ENCODE measurements at regions of chr17 and their contacts with region 1.

Region 1: GRCh38 chr17:62109378-62109902 is 44.4 kb upstream of the MED13 start:
- DNase-seq: peak; percentile 91
- H3K4me3 ChIP-seq: no peak overlapping the region
- H3K4me3 Mint-ChIP-seq: no peak overlapping the region
- H3K27ac Mint-ChIP-seq: no peak overlapping the region
- H3K4me1 ChIP-seq: peaks cover 16% of the 10 kb centered on the region
- H3K4me1 Mint-ChIP-seq: peaks cover 9% of the 10 kb centered on the region
- H3K27me3 ChIP-seq: no peaks in the 10 kb centered on the region
- H3K27me3 Mint-ChIP-seq: no peaks in the 10 kb centered on the region
- CTCF ChIP-seq: peak; percentile 90 to 99

Region 2: GRCh38 chr17:61635913-61636432 is 473.5 kb before region 1 on chr17:
- CTCF ChIA-PET with region 1: interaction called, 7 read pairs
- POLR2A ChIA-PET with region 1: no interaction called
- intact Hi-C with region 1: loop called (anchors 1 kb)
- DNase-seq: peak; percentile 55 to 67
- H3K4me3 ChIP-seq: no peak overlapping the region
- H3K4me3 Mint-ChIP-seq: no peak overlapping the region
- H3K27ac Mint-ChIP-seq: no peak overlapping the region
- H3K4me1 ChIP-seq: no peaks in the 10 kb centered on the region
- H3K4me1 Mint-ChIP-seq: no peaks in the 10 kb centered on the region
- H3K27me3 ChIP-seq: no peaks in the 10 kb centered on the region
- H3K27me3 Mint-ChIP-seq: peaks cover 29% of the 10 kb centered on the region
- CTCF ChIP-seq: peak; percentile 82 to 86

Region 3: GRCh38 chr17:62059414-62059813 is 50.0 kb before region 1 on chr17:
- CTCF ChIA-PET with region 1: interaction called, 22 read pairs
- POLR2A ChIA-PET with region 1: interaction called, 3 read pairs
- intact Hi-C with region 1: no loop called
- DNase-seq: no peak
- H3K4me3 ChIP-seq: no peak overlapping the region
- H3K4me3 Mint-ChIP-seq: no peak overlapping the region
- H3K27ac Mint-ChIP-seq: peak overlapping the region; percentile 14
- H3K4me1 ChIP-seq: peaks cover 28% of the 10 kb centered on the region
- H3K4me1 Mint-ChIP-seq: peaks cover 24% of the 10 kb centered on the region
- H3K27me3 ChIP-seq: no peaks in the 10 kb centered on the region
- H3K27me3 Mint-ChIP-seq: no peaks in the 10 kb centered on the region
- CTCF ChIP-seq: no peak

Region 4: DNA sequence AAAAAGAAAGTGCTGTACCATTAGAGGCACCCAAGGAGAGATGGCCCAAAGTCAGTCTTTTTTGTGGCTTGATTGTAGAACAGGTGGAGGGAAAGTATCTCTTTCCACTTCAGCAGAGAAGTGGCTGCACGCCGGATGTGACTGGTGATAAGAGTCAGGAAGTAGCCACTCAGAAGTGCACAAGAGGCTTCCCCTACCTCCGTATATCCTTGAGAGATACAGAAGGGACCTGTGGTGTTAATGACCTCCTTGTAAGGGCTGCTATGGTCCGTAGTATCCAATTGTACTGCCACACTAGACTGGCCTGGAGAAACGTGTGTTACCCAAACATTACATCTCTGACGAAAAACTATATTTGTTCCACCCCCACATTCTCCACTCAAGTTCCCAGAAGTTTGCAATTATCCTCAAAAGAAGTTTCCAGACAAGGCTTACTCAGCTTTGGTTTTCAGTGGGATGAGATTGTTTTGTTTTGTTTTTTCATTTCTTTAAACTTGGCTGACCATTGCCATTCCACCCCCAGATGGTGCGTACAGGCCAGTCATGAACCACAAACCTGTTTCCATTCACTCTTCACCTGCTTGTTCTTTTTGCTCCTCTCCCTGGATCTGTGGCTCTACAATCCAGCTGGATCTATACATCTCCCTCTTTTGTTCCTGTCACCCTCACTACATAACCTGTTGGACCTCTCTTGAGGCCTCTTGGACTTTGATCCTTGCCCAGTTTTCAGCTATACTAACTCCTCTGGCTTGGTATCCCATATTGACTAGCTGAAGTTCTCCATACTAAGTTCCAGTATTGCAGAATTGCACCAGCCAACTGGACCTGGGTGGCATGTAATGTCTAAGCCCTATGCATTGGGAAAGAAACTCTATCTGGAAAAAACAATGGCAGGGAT is 23.7 kb before region 1 on chr17:
- CTCF ChIA-PET with region 1: interaction called, 21 read pairs
- POLR2A ChIA-PET with region 1: interaction called, 3 read pairs
- intact Hi-C with region 1: no loop called
- DNase-seq: peak in 1 of 2 experiments; percentile 27
- H3K4me3 ChIP-seq: no peak overlapping the region
- H3K4me3 Mint-ChIP-seq: no peak overlapping the region
- H3K27ac Mint-ChIP-seq: no peak overlapping the region
- H3K4me1 ChIP-seq: peaks cover 16% of the 10 kb centered on the region
- H3K4me1 Mint-ChIP-seq: peaks cover 17% of the 10 kb centered on the region
- H3K27me3 ChIP-seq: no peaks in the 10 kb centered on the region
- H3K27me3 Mint-ChIP-seq: no peaks in the 10 kb centered on the region
- CTCF ChIP-seq: no peak

Region 5: GRCh38 chr17:62179534-62180151 is 70.2 kb after region 1 on chr17:
- CTCF ChIA-PET with region 1: interaction called, 20 read pairs
- POLR2A ChIA-PET with region 1: no interaction called
- intact Hi-C with region 1: no loop called
- DNase-seq: peak; percentile 38 to 64
- H3K4me3 ChIP-seq: no peak overlapping the region
- H3K4me3 Mint-ChIP-seq: no peak overlapping the region
- H3K27ac Mint-ChIP-seq: no peak overlapping the region
- H3K4me1 ChIP-seq: peaks cover 14% of the 10 kb centered on the region
- H3K4me1 Mint-ChIP-seq: no peaks in the 10 kb centered on the region
- H3K27me3 ChIP-seq: no peaks in the 10 kb centered on the region
- H3K27me3 Mint-ChIP-seq: no peaks in the 10 kb centered on the region
- CTCF ChIP-seq: peak in 1 of 2 experiments; percentile 12

Measured in Caco-2 (cell line).